Common myeloid progenitor, CD34-positive (primary cell): ENCODE measurements at regions of chr3 and their contacts with region 1.

Region 1: GRCh38 chr3:123559040-123559861 is 25.6 kb downstream of the HACD2 start:
- DNase-seq: peak; percentile 52 to 70 (median 62)
- H3K4me3 ChIP-seq: no peak overlapping the region
- H3K27ac ChIP-seq: no peak overlapping the region
- H3K4me1 ChIP-seq: no peaks in the 10 kb centered on the region
- H3K27me3 ChIP-seq: no peaks in the 10 kb centered on the region

Region 2: DNA sequence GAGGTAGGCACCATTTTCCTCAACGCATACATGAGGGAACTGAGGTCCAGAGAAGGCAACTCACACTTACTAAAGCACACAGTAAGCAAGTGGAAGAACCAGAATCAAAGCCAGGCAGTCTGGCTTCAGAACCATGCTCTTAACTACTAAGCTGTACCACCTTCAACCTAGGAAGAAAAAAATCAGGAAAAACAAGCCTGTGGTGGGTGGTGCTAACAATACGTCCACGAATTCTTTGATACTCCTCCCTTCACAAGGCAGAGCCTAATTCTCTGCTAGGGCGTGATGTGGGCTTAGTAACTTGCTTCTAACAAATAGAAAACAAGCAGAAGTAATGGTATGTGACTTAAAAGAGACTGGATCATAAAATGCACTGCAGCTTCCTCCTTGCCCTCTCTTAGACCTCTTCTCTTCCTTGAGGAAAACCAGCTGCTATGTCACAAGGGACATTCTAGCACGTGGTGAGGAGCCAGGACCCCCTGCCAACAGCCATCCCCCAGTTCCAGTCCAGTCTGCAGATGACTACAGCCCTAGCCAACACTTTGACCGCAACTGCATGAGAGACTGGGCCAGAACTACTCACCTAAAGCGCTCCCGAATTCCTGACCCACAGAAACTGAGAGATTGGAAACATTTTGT is 11.3 kb before region 1 on chr3:
- CTCF ChIA-PET with region 1: interaction called, 17 read pairs
- POLR2A ChIA-PET with region 1: no interaction called
- DNase-seq: no peak
- H3K4me3 ChIP-seq: no peak overlapping the region
- H3K27ac ChIP-seq: no peak overlapping the region
- H3K4me1 ChIP-seq: no peaks in the 10 kb centered on the region
- H3K27me3 ChIP-seq: no peaks in the 10 kb centered on the region

Region 3: DNA sequence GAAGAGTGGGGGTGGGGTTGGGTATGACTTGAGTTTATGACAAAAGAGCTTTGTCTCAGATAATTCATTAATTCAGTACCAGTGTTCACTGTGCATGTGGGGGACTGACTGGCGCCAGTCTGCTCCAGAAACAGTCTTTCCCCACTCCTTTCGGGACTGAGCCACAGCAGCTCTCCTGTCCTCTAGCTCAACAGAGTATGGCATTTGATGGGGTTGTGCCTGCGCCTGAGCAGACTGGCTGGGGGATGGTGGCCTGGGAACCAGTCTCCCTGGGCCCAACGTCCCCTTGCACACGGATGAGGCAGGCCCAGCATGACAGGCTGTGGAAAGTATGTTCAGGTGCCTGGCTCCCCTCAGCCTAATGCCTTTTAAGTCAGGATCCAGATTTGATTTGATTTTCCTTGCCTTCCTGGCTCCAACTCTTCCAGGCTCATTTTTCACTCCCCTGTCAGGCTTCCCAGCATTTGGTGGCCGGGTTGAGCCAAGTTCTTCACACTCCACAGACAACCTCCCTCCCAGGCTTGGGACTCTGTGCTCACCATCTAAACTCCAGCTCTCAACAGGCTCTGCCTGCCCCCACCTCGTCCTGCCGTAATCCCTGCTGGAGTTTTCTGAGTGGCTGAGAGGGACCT is 219.9 kb after region 1 on chr3:
- CTCF ChIA-PET with region 1: no interaction called
- POLR2A ChIA-PET with region 1: no interaction called
- DNase-seq: no peak
- H3K4me3 ChIP-seq: no peak overlapping the region
- H3K27ac ChIP-seq: no peak overlapping the region
- H3K4me1 ChIP-seq: no peaks in the 10 kb centered on the region
- H3K27me3 ChIP-seq: no peaks in the 10 kb centered on the region